ENCODE measurements at regions of chr3 and their contacts with region 1.

Region 1: GRCh38 chr3:100231668-100232067 is 29.1 kb upstream of the TBC1D23 start:
- DNase-seq: peak; percentile 24
- H3K4me3 ChIP-seq: no peak overlapping the region
- H3K27ac ChIP-seq: no peak overlapping the region
- H3K4me1 ChIP-seq: peaks cover 0 to 7% (median 3%) of the 10 kb centered on the region in 4 donors
- H3K27me3 ChIP-seq: no peaks in the 10 kb centered on the region
- CTCF ChIP-seq: no peak
- EP300 ChIP-seq: no peak
- POLR2A ChIP-seq: no peak

Region 2: DNA sequence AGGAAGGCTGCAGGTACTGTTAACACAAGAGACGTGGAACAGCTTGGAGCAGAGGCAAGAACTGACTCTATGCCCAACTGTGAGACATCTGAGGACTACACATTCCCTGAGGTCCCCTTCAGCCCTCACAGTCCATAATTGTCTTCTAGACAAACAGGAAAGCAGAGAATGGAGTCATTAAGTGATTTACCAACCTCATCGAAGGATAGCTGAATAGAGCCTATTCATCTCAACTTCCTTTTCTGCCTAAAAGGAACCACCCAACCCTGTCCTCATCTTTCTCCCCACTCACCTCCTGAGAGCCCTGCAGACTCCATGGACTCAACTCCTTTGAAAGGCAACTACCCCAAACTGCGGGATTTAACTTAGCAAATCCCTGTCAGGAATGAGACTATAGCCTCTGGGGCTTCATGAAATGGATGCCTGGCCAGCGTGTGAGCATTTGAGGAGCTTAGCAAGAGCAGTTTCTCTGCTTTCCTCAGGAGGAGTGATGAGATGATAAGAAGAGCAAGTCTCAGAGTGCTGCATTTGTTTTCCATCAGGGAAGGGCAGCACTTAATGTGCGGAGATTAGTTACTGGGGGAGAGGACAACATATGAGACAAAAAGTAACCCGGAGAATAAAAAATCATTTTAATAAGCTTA is 55.9 kb before region 1 on chr3:
- intact Hi-C with region 1: loop called (anchors 10 kb)
- DNase-seq: no peak
- H3K4me3 ChIP-seq: no peak overlapping the region
- H3K27ac ChIP-seq: no peak overlapping the region
- H3K4me1 ChIP-seq: peaks cover 0 to 14% (median 8%) of the 10 kb centered on the region in 4 donors
- H3K27me3 ChIP-seq: no peaks in the 10 kb centered on the region
- CTCF ChIP-seq: no peak
- EP300 ChIP-seq: no peak
- POLR2A ChIP-seq: no peak